ENCODE measurements at regions of chr1 and their contacts with region 1.

Region 1: DNA sequence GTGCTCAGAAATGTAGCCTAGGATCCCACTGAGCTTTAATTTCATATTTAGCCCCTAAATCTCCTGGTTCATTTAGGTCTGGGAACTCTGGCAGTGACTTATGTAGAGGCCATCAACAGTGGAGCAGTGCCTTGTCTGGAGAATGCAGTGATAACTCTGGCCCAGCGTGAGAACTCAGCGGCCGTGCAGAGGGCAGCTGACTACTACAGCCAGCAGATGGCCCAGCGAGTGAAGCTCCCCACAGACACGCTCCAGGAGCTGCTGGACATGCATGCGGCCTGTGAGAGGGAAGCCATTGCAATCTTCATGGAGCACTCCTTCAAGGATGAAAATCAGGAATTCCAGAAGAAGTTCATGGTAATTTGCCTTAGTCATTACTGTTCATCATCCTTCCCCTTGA is 17.8 kb downstream of the GBP6 start:
- DNase-seq: no peak
- H3K4me3 Mint-ChIP-seq: no peak overlapping the region
- H3K27ac Mint-ChIP-seq: no peak overlapping the region
- H3K4me1 Mint-ChIP-seq: peaks cover 8% of the 10 kb centered on the region
- H3K27me3 Mint-ChIP-seq: no peaks in the 10 kb centered on the region

Region 2: DNA sequence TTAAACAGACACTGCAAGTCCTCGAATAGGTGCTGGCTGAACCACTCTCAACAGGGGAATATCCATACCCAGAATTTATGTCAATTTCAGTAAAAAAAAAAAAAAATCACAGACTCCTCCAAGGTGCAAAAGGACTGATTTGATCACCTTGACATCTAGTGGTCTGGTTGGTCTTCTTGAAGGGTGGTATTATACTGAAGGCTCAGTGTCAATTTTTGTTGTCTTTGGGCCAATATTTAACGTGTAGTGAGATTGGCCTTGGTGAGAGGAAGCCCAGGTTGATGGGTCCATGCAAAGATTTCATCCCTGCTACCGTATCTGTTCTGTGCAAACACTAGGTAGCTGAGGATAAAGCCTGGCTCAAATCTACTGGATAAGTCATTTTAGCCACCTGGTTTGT is 104.9 kb before region 1 on chr1:
- CTCF ChIA-PET with region 1: no interaction called
- intact Hi-C with region 1: no loop called
- DNase-seq: no peak
- H3K4me3 Mint-ChIP-seq: no peak overlapping the region
- H3K27ac Mint-ChIP-seq: peak overlapping the region; percentile 61
- H3K4me1 Mint-ChIP-seq: peaks cover 71% of the 10 kb centered on the region
- H3K27me3 Mint-ChIP-seq: no peaks in the 10 kb centered on the region

Region 3: DNA sequence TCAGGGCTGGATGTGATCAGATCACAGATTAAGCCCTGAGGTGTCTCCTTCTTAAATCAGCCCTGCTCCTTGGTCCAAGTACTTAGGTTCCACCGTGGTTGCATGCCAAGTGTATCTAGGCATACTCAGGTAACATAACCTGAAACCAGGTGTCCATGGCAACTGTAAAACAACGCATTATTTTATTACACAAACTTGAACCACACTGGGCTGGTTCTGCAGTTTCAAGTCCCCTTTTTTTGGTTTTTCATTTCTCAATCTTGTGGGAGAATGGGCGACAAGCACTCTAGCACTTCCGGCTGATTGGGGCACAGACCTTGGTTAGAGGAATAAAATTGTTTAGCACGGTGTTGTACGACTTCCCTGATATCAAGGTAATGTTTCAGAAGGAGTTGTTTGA is 47.4 kb after region 1 on chr1:
- CTCF ChIA-PET with region 1: no interaction called
- intact Hi-C with region 1: loop called (anchors 5 kb)
- DNase-seq: no peak
- H3K4me3 Mint-ChIP-seq: no peak overlapping the region
- H3K27ac Mint-ChIP-seq: no peak overlapping the region
- H3K4me1 Mint-ChIP-seq: peaks cover 4% of the 10 kb centered on the region
- H3K27me3 Mint-ChIP-seq: peaks cover 2% of the 10 kb centered on the region